CD4-positive, alpha-beta T cell (primary cell): ENCODE measurements at regions of chr10 and their contacts with region 1.

Region 1: DNA sequence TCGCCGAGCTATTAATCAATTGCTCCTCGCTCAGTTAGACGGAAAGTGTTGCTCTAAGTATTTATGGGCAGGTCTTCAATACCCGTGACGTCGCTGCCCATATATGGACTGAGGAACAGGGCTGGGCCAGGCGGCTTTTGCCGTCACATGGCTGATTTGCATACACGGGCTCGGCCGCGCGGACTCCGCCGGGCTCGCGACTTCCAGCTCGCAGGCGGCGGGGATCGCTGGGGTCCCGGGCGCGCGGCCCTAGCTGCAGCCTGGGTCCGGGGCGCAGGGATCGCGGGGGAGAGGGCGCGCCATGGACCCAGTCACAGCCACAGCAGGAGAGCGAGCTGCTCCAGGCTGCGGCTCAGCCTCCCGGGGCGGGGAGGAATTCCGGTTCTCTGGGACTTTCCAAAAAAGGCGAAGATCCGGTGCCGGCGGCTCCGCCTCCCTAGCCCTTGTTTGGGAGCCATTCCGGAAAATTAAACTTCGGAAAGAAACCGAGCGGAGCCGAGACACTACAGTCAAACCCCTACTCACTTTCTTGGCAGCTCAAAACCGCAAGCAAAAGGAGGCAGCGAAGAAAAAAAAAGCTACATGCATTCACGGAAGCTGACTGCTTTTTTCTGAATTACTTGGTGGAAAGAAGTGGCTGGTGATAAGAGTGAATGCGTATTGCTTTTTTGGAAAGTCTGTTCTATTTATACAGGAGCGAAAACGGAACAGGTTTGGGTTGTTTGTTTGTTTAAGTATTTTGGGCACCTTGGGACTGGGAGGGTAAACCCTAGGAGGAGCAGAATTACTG is at the start of gene EGR2:
- DNase-seq: peak; percentile 91 to 97 (median 95)
- ATAC-seq: peak; percentile 81
- H3K4me3 ChIP-seq: peak within 1 kb of the TSS; percentile 68
- H3K4me3 Mint-ChIP-seq: peak within 1 kb of the TSS; percentile 97
- H3K27ac ChIP-seq: peak within 1 kb of the TSS; percentile 70 to 92
- H3K27ac Mint-ChIP-seq: peak within 1 kb of the TSS; percentile 95
- H3K4me1 ChIP-seq: peaks cover 52% of the 10 kb centered on the region
- H3K4me1 Mint-ChIP-seq: peaks cover 53% of the 10 kb centered on the region
- H3K27me3 ChIP-seq: peaks cover 36 to 39% of the 10 kb centered on the region in 2 experiments
- H3K27me3 Mint-ChIP-seq: peaks cover 55% of the 10 kb centered on the region
- CTCF ChIP-seq: no peak
- total RNA-seq, gene EGR2: 3.2 to 5.4 TPM

Region 2: GRCh38 chr10:61903221-61903927 is 913.2 kb before region 1 on chr10:
- CTCF ChIA-PET with region 1: no interaction called
- POLR2A ChIA-PET with region 1: interaction called, 7 read pairs
- intact Hi-C with region 1: loop called in 1 of 2 experiments (anchors 10 kb)
- DNase-seq: peak; percentile 42 to 84 (median 62)
- ATAC-seq: peak; percentile 33
- H3K4me3 ChIP-seq: peak overlapping the region; percentile 92
- H3K4me3 Mint-ChIP-seq: peak overlapping the region; percentile 94
- H3K27ac ChIP-seq: peak overlapping the region; percentile 92 to 98
- H3K27ac Mint-ChIP-seq: peak overlapping the region; percentile 91
- H3K4me1 ChIP-seq: peaks cover 4% of the 10 kb centered on the region
- H3K4me1 Mint-ChIP-seq: peaks cover 51% of the 10 kb centered on the region
- H3K27me3 ChIP-seq: no peaks in the 10 kb centered on the region
- H3K27me3 Mint-ChIP-seq: no peaks in the 10 kb centered on the region
- CTCF ChIP-seq: peak; percentile 49

Region 3: GRCh38 chr10:62437696-62438095 is 378.8 kb before region 1 on chr10:
- CTCF ChIA-PET with region 1: no interaction called
- POLR2A ChIA-PET with region 1: no interaction called
- intact Hi-C with region 1: loop called in 1 of 2 experiments (anchors 1 kb)
- DNase-seq: peak in 5 of 14 experiments; percentile 0 to 74 (median 73)
- ATAC-seq: peak; percentile 59
- H3K4me3 ChIP-seq: no peak overlapping the region
- H3K4me3 Mint-ChIP-seq: no peak overlapping the region
- H3K27ac ChIP-seq: no peak overlapping the region
- H3K27ac Mint-ChIP-seq: no peak overlapping the region
- H3K4me1 ChIP-seq: no peaks in the 10 kb centered on the region
- H3K4me1 Mint-ChIP-seq: no peaks in the 10 kb centered on the region
- H3K27me3 ChIP-seq: no peaks in the 10 kb centered on the region
- H3K27me3 Mint-ChIP-seq: peaks cover 7% of the 10 kb centered on the region
- CTCF ChIP-seq: peak; percentile 83

Region 4: GRCh38 chr10:62610649-62611229 is 205.8 kb before region 1 on chr10:
- CTCF ChIA-PET with region 1: interaction called, 40 read pairs
- POLR2A ChIA-PET with region 1: interaction called, 25 read pairs
- intact Hi-C with region 1: loop called (anchors 1 kb)
- DNase-seq: peak; percentile 48 to 86 (median 62)
- ATAC-seq: peak; percentile 99
- H3K4me3 ChIP-seq: no peak overlapping the region
- H3K4me3 Mint-ChIP-seq: no peak overlapping the region
- H3K27ac ChIP-seq: no peak overlapping the region
- H3K27ac Mint-ChIP-seq: no peak overlapping the region
- H3K4me1 ChIP-seq: peaks cover 8% of the 10 kb centered on the region
- H3K4me1 Mint-ChIP-seq: peaks cover 4% of the 10 kb centered on the region
- H3K27me3 ChIP-seq: no peaks in the 10 kb centered on the region
- H3K27me3 Mint-ChIP-seq: peaks cover 12% of the 10 kb centered on the region
- CTCF ChIP-seq: peak; percentile 83

Region 5: GRCh38 chr10:62689712-62690111 is 126.8 kb before region 1 on chr10:
- CTCF ChIA-PET with region 1: interaction called, 13 read pairs
- POLR2A ChIA-PET with region 1: interaction called, 3 read pairs
- intact Hi-C with region 1: loop called in 1 of 2 experiments (anchors 5 kb)
- DNase-seq: peak in 3 of 14 experiments; percentile 63 to 79 (median 65)
- ATAC-seq: peak; percentile 42
- H3K4me3 ChIP-seq: peak overlapping the region; percentile 2
- H3K4me3 Mint-ChIP-seq: peak overlapping the region; percentile 74
- H3K27ac ChIP-seq: peak overlapping the region in 1 of 2 donors; percentile 42
- H3K27ac Mint-ChIP-seq: peak overlapping the region; percentile 81
- H3K4me1 ChIP-seq: peaks cover 44% of the 10 kb centered on the region
- H3K4me1 Mint-ChIP-seq: peaks cover 58% of the 10 kb centered on the region
- H3K27me3 ChIP-seq: no peaks in the 10 kb centered on the region
- H3K27me3 Mint-ChIP-seq: no peaks in the 10 kb centered on the region
- CTCF ChIP-seq: no peak

Region 6: DNA sequence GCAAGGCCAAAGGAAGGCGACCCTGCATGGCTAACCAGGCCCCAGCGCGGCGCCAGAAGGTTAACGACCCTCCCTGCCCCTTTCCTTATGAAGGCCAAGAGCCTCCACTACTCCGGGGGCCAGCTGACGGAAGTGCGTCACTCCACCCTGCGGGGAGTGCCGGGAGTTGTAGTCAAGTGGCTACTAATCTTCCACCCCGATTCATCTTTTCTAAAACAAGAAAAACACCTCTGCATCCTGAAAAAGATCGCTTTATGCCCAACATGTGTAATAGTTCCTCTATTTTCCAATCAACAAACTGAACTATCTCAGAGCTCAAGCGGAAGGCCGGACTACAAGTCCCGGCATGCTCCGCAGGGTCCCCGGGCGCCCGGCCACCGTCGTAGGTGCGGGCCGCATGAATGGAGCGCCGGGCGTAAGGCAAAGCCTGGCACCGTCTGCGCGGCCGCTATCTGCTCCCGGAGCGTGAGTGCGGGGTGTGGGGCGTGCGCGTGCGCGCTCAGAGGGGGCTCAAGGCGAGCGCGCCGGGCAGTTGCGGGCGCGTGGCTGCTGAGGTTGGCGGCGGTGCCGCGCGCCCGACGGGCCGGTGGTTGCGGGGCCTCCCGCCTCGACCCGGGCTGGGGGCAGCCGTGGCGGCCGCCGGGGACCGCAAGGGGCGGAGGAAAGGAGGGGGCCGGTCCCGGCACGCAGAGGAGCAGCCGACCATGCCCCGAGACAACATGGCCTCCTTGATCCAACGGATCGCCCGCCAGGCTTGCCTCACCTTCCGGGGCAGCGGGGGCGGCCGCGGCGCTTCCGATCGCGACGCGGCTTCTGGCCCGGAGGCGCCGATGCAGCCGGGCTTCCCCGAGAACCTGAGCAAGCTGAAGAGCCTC is 11.9 kb before region 1 on chr10 and contains the start of gene ADO:
- CTCF ChIA-PET with region 1: interaction called, 19 read pairs
- POLR2A ChIA-PET with region 1: interaction called, 106 read pairs
- intact Hi-C with region 1: loop called (anchors 1 kb)
- DNase-seq: peak; percentile 63 to 90 (median 72)
- ATAC-seq: peak; percentile 89
- H3K4me3 ChIP-seq: peak within 1 kb of the TSS; percentile 64
- H3K4me3 Mint-ChIP-seq: peak within 1 kb of the TSS; percentile 93
- H3K27ac ChIP-seq: peak within 1 kb of the TSS; percentile 76 to 94
- H3K27ac Mint-ChIP-seq: peak within 1 kb of the TSS; percentile 94
- H3K4me1 ChIP-seq: peaks cover 19% of the 10 kb centered on the region
- H3K4me1 Mint-ChIP-seq: peaks cover 44% of the 10 kb centered on the region
- H3K27me3 ChIP-seq: no peaks in the 10 kb centered on the region
- H3K27me3 Mint-ChIP-seq: no peaks in the 10 kb centered on the region
- CTCF ChIP-seq: no peak
- total RNA-seq, gene ADO: 14.3 to 15.9 TPM

Region 7: DNA sequence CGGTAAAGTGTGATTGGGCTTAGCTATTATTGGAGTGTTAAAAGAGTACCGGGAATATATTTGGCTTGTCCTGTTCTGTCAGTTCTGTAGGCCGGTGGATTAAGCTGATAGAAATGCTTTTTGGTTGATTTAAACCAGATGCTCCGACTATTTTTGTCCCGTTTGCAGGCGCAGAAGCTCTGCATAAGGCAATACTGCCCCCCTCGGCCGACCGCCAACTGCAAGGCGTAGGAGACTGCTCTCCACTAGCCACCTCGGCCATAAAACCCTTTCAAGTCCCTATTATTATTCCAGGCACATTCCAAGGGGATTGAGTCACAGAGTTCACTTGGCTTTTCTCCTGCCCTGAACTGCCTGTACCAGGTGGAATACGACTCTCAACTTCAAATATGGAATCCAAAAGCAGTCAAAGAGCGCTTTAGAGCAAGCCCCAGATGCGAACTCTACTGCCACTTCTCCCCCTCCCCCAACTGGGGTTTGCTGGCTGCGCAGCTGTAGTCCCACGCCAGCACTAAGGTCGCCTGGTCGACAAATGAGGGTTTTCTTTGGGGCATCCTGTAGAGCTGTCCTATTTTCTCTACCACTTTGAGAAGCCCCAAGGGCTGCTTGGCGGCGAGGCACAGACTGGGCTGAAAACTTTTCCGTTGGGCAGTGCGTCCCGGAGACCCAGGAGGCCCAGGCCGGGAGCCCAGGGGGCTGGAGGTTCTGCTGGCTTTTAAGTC is 813.0 kb after region 1 on chr10:
- CTCF ChIA-PET with region 1: no interaction called
- POLR2A ChIA-PET with region 1: no interaction called
- intact Hi-C with region 1: loop called in 1 of 2 experiments (anchors 10 kb)
- DNase-seq: peak; percentile 61 to 87 (median 75)
- ATAC-seq: peak; percentile 62
- H3K4me3 ChIP-seq: peak overlapping the region; percentile 77
- H3K4me3 Mint-ChIP-seq: peak overlapping the region; percentile 95
- H3K27ac ChIP-seq: peak overlapping the region; percentile 28 to 43
- H3K27ac Mint-ChIP-seq: peak overlapping the region; percentile 77
- H3K4me1 ChIP-seq: peaks cover 23% of the 10 kb centered on the region
- H3K4me1 Mint-ChIP-seq: peaks cover 23% of the 10 kb centered on the region
- H3K27me3 ChIP-seq: no peaks in the 10 kb centered on the region
- H3K27me3 Mint-ChIP-seq: no peaks in the 10 kb centered on the region
- CTCF ChIP-seq: peak; percentile 97